ENCODE measurements at regions of chr19 and their contacts with region 1.

Region 1: GRCh38 chr19:8261347-8262310 is 46.5 kb downstream of the CD320 start:
- DNase-seq: no peak
- H3K4me3 ChIP-seq: no peak overlapping the region
- CTCF ChIP-seq: no peak
- POLR2A ChIP-seq: no peak

Region 2: GRCh38 chr19:8321060-8321985 is 59.7 kb after region 1 on chr19 and contains the starts of genes NDUFA7 and RPS28:
- intact Hi-C with region 1: loop called (anchors 10 kb)
- DNase-seq: peak; percentile 95 to 100
- H3K4me3 ChIP-seq: peak within 1 kb of the TSS; percentile 87
- CTCF ChIP-seq: peak in 1 of 3 donors; percentile 7
- POLR2A ChIP-seq: peak in 1 of 2 donors; percentile 74
- total RNA-seq, gene NDUFA7: 24.5 to 39.5 (median 32.3) TPM
- total RNA-seq, gene RPS28: 427 to 879 (median 727) TPM

Region 3: DNA sequence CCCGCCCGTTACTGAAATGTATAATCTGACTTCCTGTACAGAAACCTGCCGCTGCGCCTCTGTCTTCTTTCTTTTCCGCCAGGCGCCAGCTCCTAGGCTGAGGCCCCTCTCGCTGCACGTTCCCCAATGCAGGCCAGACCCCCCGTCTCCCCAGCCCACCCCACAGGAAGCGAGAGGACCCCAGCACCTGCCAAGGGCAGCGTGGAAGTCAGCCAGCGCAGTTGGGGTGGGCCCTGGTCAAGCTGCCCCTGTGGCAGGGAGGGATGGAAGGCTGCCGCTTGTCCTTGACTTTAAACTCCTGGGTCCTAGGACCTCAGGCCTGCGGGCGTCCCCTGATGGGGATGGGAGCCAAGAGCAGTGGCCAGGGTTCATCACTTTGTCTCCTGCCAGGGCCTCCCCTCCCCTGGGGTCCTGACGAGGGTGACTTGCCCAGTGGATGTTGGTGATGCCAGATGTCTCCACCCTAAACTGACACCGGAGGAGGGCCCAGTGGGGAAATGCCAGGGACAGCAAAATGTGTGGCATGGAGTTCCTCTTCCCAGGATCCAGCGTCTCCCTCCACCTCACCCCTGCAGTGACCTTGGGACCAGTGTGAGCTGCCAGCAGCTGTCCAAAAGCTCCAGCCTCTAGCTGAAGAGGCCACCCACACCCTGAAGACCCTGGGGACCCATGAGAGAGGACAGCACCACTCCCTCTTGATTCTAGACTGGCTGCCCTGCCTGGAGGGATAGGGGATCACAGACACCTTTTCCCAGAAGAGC is 142.9 kb after region 1 on chr19:
- intact Hi-C with region 1: no loop called
- DNase-seq: no peak
- H3K4me3 ChIP-seq: no peak overlapping the region
- CTCF ChIP-seq: no peak
- POLR2A ChIP-seq: no peak

Region 4: DNA sequence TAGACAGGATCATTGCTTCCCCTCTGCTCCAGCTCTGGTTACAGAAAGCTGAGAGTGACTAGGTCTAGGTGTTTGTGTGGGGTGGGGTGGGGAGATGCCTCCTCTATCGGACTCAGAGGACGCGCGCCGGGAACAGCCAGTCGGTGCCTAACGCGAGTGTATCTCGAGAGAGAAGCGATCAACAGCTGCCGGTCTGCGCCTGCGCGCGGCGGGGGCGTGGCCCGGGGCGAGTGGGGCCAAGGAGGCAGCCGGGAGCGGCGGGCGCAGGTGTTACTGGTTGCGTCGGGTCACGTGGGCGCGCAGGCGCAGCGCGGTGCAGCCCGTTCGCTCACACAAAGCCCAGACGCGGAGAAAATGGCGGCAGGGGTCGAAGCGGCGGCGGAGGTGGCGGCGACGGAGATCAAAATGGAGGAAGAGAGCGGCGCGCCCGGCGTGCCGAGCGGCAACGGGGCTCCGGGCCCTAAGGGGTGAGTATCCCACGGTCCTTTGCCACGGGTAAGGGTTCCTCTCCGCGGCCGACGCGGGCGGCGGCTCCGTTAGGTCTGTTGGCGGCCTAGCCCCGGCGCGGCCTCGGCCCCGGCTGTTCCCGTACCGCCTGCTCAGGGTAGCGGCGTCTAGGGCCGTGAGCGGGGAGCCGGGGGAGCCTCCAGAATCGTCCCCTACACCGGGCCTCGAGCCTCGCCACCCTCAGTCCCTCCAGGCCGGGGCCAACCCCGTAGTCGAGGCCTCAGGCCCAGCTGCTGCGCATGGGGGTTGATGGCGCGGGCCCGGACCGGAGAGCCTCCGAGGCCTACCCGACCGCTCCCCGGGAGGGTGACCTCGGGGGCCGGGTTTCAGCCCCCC is 183.2 kb after region 1 on chr19 and contains the start of gene HNRNPM:
- intact Hi-C with region 1: no loop called
- DNase-seq: peak; percentile 99 to 100
- H3K4me3 ChIP-seq: peak within 1 kb of the TSS; percentile 96
- CTCF ChIP-seq: peak in 1 of 3 donors; percentile 6
- POLR2A ChIP-seq: peak in 1 of 2 donors; percentile 78
- total RNA-seq, gene HNRNPM: 60.4 to 103 (median 79.7) TPM

Measured in lower leg skin (tissue), 4 donors.